HepG2 (cell line): ENCODE measurements at regions of chr14 and their contacts with region 1.

Region 1: DNA sequence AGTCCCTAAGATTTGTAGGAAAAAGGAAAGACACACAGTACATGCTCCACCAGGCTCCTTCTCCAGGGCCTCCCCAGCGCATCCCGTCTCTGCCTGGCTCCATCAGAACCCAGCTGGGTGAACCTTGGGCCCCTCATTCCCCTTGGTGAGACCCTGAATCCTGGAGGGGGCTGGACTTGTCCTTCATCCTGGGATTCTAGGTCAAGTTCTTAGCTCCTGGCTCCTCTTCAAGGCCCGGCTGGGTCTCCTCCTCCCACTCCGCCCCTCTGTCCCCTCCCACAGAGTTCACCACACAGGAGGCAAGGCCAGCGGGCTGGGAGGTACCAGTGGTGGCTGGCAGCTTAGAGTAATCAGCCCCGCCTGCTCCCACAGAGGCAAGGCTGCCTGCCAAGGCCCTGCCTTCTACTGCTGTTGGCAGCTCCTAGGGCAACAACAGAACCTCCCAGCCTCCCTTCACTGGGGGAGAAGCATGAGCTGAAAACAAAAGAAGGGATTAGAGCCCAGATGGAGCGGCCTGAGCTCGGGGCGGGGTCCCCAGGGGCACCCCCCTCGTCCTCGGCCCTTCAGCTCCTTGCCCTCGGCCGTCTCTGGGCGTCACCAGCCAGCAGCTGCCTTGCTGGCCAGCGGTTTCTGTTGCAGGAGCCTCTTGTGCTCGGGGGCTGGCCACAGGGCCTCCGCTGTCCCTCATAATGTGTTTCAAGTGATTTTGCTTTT is 49.4 kb downstream of the PSMA6 start:
- DNase-seq: peak; percentile 91
- ATAC-seq: peak; percentile 85
- H3K4me3 ChIP-seq: peak overlapping the region; percentile 63 to 78 (median 64)
- H3K27ac ChIP-seq: no peak overlapping the region
- H3K4me1 ChIP-seq: peaks cover 90% of the 10 kb centered on the region
- H3K27me3 ChIP-seq: peaks cover 0 to 3% of the 10 kb centered on the region in 2 experiments; a peak in 2 of 5 replicates
- CTCF ChIP-seq: no peak; the same call in 1 of the 2 replicates
- EP300 ChIP-seq: no peak; a peak in 1 of 4 replicates
- POLR2A ChIP-seq: peak in 1 of 2 experiments; percentile 62; a peak in 2 of 4 replicates
- RAD21 ChIP-seq: 0 out of 2 replicates have a peak, but pooled peaks have one; percentile 31

Region 2: DNA sequence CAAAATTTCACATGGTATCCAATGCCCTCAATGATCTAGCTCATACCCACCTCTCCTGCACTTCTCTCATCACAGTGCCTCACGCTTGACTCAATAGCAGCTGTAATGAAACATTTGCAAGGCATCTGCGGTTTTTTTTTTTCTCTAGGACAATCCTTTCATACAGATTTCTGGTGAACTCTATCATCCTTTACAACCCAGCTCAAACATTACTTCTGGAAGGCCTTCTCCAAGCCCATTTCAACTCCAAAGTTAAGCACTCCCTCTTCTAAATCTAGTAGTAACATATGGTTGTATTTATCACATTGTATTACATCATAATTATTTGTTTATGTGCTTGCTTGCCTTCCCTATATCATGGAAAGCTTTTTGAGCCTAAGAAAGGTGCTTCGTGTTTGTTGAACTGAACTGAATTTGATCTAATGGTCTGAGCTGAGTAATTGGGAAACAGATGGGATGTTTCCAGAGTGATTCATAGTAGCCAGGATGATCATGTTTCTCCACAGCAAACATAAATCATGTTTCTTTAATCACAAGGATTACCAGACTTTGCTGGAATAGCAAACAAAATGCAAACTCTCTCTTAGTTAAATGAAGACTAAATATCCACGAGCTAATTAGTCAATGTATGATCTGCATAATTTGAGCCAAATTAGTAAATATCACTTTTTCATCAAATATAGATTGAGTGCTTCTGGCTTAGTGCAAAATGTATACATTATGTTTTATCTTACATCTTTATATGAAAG is 641.6 kb before region 1 on chr14:
- CTCF ChIA-PET with region 1: no interaction called
- POLR2A ChIA-PET with region 1: no interaction called
- in situ Hi-C with region 1: no loop called
- intact Hi-C with region 1: no loop called
- DNase-seq: peak; percentile 89
- ATAC-seq: peak; percentile 85
- H3K4me3 ChIP-seq: no peak overlapping the region
- H3K27ac ChIP-seq: peak overlapping the region; percentile 2
- H3K4me1 ChIP-seq: peaks cover 15% of the 10 kb centered on the region
- H3K27me3 ChIP-seq: no peaks in the 10 kb centered on the region
- CTCF ChIP-seq: no peak
- EP300 ChIP-seq: peak; percentile 60 to 66; a peak in 3 of 4 replicates
- POLR2A ChIP-seq: no peak
- RAD21 ChIP-seq: no peak

Region 3: DNA sequence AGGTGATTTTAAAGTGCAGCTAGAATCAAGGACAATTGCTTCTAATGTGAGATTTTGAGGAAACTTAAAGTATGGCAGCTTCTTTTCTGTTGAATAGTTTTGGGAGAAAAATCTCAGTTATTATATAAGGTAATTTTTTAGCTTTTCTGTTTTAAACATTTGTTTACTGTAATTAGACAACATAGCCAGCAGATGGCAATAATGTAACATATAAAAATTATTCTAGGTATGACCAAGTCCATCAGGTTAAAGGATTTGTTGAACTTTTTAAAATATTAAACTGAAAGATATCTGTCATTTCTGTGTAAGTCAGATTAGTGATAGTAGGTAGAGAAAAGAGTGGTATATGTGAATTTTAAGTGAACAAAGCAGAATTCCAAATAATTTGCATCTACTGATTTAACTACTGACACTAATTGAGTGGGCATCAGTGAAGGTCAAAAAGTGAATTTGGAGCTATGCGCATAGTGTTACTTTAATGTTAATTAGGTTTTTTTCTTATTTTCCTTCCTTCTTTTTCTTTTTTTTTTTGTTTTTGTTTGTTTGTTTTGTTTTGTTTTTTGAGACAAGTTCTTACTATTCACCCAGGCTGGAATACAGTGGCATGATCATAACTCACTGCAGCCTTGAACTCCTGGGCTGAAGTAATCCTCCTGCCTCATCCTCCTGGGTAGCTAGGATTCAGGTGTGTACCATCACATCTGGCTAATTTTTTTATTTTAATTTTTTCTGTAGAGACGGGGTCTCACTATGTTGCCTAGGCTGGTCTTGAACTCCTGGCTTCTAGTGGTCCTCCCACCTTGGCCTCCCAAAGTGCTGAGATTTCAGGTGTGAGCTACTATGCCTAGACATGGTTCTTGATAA is 200.7 kb before region 1 on chr14:
- CTCF ChIA-PET with region 1: no interaction called
- POLR2A ChIA-PET with region 1: no interaction called
- in situ Hi-C with region 1: no loop called
- intact Hi-C with region 1: loop called (anchors 5 kb)
- DNase-seq: peak; percentile 68
- ATAC-seq: no peak
- H3K4me3 ChIP-seq: no peak overlapping the region
- H3K27ac ChIP-seq: no peak overlapping the region
- H3K4me1 ChIP-seq: peaks cover 17% of the 10 kb centered on the region
- H3K27me3 ChIP-seq: no peaks in the 10 kb centered on the region
- CTCF ChIP-seq: peak; percentile 64
- EP300 ChIP-seq: no peak
- POLR2A ChIP-seq: no peak
- RAD21 ChIP-seq: peak; percentile 69

Region 4: GRCh38 chr14:35355981-35356841 is 14.6 kb after region 1 on chr14:
- CTCF ChIA-PET with region 1: no interaction called
- POLR2A ChIA-PET with region 1: interaction called, 15 read pairs
- in situ Hi-C with region 1: no loop called
- intact Hi-C with region 1: loop called (anchors 1 kb)
- DNase-seq: peak; percentile 91
- ATAC-seq: peak; percentile 81
- H3K4me3 ChIP-seq: peak overlapping the region; percentile 9 to 27 (median 12); a peak in 5 of 6 replicates
- H3K27ac ChIP-seq: peak overlapping the region; percentile 41
- H3K4me1 ChIP-seq: peaks cover 58% of the 10 kb centered on the region
- H3K27me3 ChIP-seq: no peaks in the 10 kb centered on the region
- CTCF ChIP-seq: no peak
- EP300 ChIP-seq: peak; percentile 8 to 82; a peak in 3 of 4 replicates
- POLR2A ChIP-seq: 0 out of 4 replicates have a peak, but pooled peaks of 1 of the 2 experiments have one; percentile 25
- RAD21 ChIP-seq: 0 out of 2 replicates have a peak, but pooled peaks have one; percentile 13

Region 5: DNA sequence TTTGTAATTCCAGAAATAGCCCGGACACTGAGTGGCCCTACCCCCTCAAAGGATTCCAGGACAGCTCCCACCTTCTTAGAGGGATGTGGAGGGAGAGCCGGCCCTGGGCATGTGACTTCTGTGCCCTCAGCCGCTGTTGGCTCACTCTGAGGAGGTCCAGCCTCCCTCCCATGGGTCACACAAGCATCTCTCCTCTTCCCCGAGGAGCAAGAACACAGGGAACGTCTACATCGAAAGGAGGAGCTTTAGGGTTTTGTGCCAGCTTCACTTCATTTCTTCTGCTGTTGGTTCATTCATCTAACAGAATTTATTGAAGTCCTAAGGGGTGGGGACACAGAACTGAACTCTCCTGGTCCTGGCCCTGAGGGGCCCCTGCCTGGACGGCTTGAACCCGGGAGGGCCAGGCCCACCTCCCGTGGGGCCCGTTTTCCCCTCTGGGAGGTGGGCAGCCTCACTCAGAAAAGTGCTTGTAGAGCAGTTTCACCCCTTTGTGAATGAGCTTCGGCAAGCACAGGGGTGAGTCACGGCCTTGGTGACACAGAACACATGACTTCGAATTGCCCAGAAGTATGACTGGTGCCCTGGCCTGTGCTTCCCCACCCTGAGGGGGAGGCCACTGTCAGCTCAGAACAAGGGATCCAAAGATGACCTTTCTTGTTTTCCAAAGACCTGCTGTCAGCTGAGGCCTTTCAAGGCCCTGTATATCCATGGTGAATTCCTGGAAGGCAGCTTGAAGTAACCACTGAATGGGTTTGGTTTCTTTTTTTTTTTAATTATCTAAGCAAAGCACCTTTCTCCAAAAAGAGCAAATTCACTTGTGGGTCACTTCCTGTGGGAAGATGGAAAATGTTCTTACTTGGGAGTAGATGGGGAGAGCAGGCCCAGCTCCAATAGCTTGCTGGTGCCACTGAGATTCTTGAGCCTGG is 23.8 kb after region 1 on chr14:
- CTCF ChIA-PET with region 1: no interaction called
- POLR2A ChIA-PET with region 1: interaction called, 35 read pairs
- in situ Hi-C with region 1: no loop called
- intact Hi-C with region 1: loop called (anchors 1 kb)
- DNase-seq: peak; percentile 98
- ATAC-seq: peak; percentile 87
- H3K4me3 ChIP-seq: peak overlapping the region in 2 of 3 experiments; percentile 1 to 38; a peak in 2 of 6 replicates
- H3K27ac ChIP-seq: no peak overlapping the region
- H3K4me1 ChIP-seq: peaks cover 61% of the 10 kb centered on the region
- H3K27me3 ChIP-seq: 0 out of 5 replicates have a peak, but pooled peaks cover 0 to 6% of the 10 kb centered on the region in 2 experiments
- CTCF ChIP-seq: no peak; the same call in 1 of the 2 replicates
- EP300 ChIP-seq: peak; percentile 73 to 75; a peak in 3 of 4 replicates
- POLR2A ChIP-seq: 0 out of 4 replicates have a peak, but pooled peaks of 1 of the 2 experiments have one; percentile 28
- RAD21 ChIP-seq: peak; percentile 35; the same call in 1 of the 2 replicates

Region 6: GRCh38 chr14:35374273-35374681 is 32.7 kb after region 1 on chr14:
- CTCF ChIA-PET with region 1: no interaction called
- POLR2A ChIA-PET with region 1: interaction called, 20 read pairs
- in situ Hi-C with region 1: no loop called
- intact Hi-C with region 1: no loop called
- DNase-seq: peak; percentile 89
- ATAC-seq: peak; percentile 6; the same call in 2 of the 3 replicates
- H3K4me3 ChIP-seq: no peak overlapping the region
- H3K27ac ChIP-seq: no peak overlapping the region
- H3K4me1 ChIP-seq: peaks cover 48% of the 10 kb centered on the region
- H3K27me3 ChIP-seq: no peaks in the 10 kb centered on the region
- CTCF ChIP-seq: no peak
- EP300 ChIP-seq: peak; percentile 63 to 91
- POLR2A ChIP-seq: no peak
- RAD21 ChIP-seq: no peak

Region 7: DNA sequence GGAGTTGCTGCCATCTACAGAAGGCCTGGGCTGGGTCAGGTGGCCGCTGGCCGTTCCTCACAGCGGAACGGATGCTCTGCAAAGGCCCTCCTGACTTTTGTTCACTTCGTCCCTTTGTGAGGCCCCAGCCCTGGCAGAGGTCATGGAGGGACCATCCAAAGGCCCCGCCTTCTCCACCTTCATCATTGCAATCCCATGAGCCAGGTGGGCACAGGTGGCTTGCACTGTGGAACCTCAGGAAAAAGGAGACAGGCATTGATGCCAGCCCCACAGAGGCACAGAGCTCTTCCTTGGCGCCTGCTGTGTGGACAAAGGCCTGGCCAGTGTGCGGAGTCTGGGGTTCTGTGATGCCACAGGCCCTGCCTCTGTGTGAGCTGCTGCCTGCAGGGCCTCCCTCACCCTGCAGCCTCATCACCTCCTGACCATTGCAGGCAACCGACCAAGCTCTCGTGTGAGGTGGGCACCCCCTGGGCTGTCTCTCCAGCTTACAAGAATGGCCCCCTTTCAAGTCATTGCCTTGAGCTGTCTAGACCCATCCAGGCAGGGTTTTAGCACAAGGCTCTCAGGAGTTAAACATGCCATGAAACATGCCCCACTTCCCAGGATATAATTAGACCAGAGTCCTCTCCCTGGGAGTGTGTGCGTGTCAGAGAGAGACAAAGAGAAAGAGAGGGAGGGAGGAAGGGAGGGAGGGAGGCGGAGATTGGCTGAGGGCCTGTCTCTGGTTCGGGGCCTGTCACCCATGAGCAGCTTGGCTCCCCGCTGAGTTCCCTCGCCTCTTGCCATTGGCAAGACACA is 43.6 kb after region 1 on chr14:
- CTCF ChIA-PET with region 1: interaction called, 4 read pairs
- POLR2A ChIA-PET with region 1: interaction called, 43 read pairs
- in situ Hi-C with region 1: no loop called
- intact Hi-C with region 1: loop called (anchors 2 kb)
- DNase-seq: peak; percentile 85
- ATAC-seq: peak; percentile 83
- H3K4me3 ChIP-seq: peak overlapping the region; percentile 41 to 73 (median 44)
- H3K27ac ChIP-seq: peak overlapping the region; percentile 29
- H3K4me1 ChIP-seq: peaks cover 52% of the 10 kb centered on the region
- H3K27me3 ChIP-seq: no peaks in the 10 kb centered on the region
- CTCF ChIP-seq: peak; percentile 10; the same call in 1 of the 2 replicates
- EP300 ChIP-seq: peak; percentile 17 to 30; a peak in 2 of 4 replicates
- POLR2A ChIP-seq: peak in 1 of 2 experiments; percentile 59; a peak in 2 of 4 replicates
- RAD21 ChIP-seq: no peak